ENCODE measurements at regions of chr20 and their contacts with region 1.

Region 1: DNA sequence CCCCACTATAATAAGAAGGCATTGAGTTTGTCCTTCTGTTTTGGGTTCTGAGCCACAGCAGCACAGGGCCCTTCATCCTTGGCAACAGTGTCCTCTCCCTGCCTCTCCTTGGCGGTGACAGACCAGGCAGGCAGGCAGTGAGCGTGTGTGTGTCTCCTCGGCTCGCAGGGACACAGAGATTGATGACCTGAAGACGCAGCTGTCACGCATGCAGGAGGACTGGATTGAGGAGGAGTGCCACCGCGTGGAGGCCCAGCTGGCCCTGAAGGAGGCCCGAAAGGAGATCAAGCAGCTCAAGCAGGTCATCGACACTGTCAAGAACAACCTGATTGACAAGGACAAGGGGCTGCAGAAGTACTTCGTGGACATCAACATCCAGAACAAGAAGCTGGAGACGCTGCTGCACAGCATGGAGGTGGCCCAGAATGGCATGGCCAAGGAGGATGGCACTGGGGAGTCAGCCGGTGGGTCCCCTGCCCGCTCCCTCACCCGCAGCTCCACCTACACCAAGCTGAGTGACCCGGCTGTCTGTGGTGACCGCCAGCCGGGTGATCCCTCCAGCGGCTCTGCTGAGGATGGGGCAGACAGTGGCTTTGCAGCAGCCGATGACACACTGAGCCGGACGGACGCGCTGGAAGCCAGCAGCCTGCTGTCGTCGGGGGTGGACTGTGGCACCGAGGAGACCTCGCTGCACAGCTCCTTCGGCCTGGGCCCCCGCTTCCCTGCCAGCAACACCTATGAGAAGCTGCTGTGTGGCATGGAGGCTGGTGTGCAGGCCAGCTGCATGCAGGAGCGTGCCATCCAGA is 24.0 kb downstream of the SDCBP2 start:
- DNase-seq: no peak
- ATAC-seq: no peak
- H3K4me3 ChIP-seq: no peak overlapping the region
- H3K4me3 Mint-ChIP-seq: no peak overlapping the region
- H3K27ac ChIP-seq: no peak overlapping the region
- H3K27ac Mint-ChIP-seq: no peak overlapping the region
- H3K4me1 ChIP-seq: peaks cover 3 to 15% of the 10 kb centered on the region in 2 experiments
- H3K4me1 Mint-ChIP-seq: peaks cover 14 to 16% (median 15%) of the 10 kb centered on the region in 3 donors
- H3K27me3 ChIP-seq: no peaks in the 10 kb centered on the region
- H3K27me3 Mint-ChIP-seq: no peaks in the 10 kb centered on the region

Region 2: GRCh38 chr20:1450926-1451491 is 146.1 kb after region 1 on chr20:
- CTCF ChIA-PET with region 1: no interaction called
- POLR2A ChIA-PET with region 1: interaction called in 1 of 2 experiments, 12 read pairs
- DNase-seq: no peak
- ATAC-seq: no peak
- H3K4me3 ChIP-seq: no peak overlapping the region
- H3K4me3 Mint-ChIP-seq: no peak overlapping the region
- H3K27ac ChIP-seq: no peak overlapping the region
- H3K27ac Mint-ChIP-seq: no peak overlapping the region
- H3K4me1 ChIP-seq: no peaks in the 10 kb centered on the region
- H3K4me1 Mint-ChIP-seq: no peaks in the 10 kb centered on the region
- H3K27me3 ChIP-seq: no peaks in the 10 kb centered on the region
- H3K27me3 Mint-ChIP-seq: no peaks in the 10 kb centered on the region

Measured in T-cell (primary cell).